OCI-LY7 (cell line): ENCODE measurements at regions of chr17 and their contacts with region 1.

Region 1: DNA sequence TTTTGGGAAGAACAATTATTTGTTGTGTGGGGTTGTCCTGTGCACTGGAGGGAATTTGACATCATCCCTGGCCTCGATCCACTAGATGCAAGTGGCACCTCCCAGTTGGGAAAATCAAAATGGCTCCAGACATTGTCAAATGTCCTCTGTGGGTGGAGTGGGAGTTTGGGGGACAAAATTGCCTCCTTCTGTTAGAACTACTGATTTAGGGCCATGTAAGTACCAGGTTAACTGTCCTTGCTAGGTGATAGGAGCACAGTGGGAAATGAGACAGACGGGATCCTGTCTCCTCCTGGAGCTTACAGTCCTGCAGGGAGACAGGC is 56.8 kb downstream of the ARHGAP23 start:
- DNase-seq: no peak
- H3K4me3 ChIP-seq: no peak overlapping the region
- H3K27ac ChIP-seq: peak overlapping the region; percentile 68
- H3K4me1 ChIP-seq: peaks cover 14% of the 10 kb centered on the region
- CTCF ChIP-seq: peak; percentile 5; the same call in 1 of the 2 replicates

Region 2: GRCh38 chr17:38351412-38352222 is 133.5 kb before region 1 on chr17 and contains the start of gene SOCS7:
- CTCF ChIA-PET with region 1: no interaction called
- POLR2A ChIA-PET with region 1: interaction called, 3 read pairs
- intact Hi-C with region 1: loop called (anchors 5 kb)
- DNase-seq: peak; percentile 93
- H3K4me3 ChIP-seq: peak within 1 kb of the TSS; percentile 89
- H3K27ac ChIP-seq: peak within 1 kb of the TSS; percentile 35
- H3K4me1 ChIP-seq: peaks cover 48% of the 10 kb centered on the region
- CTCF ChIP-seq: no peak
- total RNA-seq, gene SOCS7: 27.0 and 36.1 TPM in 2 replicates

Region 3: DNA sequence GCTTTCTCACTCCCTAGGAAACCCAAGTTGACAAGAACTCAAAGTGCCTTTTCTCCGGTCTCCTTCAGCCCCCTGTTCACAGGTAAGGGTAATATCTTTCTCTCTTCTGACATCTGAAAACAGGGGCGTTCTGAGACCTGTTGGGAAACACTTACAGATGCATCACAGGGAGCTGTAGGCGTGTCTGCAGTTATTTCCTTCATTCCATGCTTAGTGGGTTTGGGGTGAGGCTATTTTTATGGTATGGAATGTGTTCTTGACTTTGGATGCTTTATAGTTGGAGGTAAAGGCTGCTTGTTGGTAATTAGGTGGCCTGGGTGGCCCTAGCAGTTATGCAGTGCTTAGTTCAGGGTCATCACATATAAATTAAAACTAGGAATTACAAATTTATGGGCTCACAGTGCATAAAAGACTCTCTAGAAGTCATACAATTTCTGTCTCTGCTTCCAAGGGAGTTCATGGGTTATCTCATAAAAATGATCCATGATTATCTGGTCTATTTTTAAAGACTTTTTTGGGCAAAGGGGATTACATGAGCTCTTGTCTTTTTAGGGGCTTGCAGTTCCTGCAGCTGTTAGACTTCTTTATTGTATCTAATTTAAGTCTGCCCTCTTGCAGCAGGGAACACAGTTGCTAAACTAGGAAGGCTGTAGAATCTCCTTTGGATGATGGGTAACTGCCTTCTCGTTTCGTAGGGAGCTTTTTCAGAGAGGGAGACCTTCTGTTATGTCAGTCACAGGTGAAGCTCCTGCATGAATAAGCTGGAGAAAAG is 123.2 kb before region 1 on chr17:
- CTCF ChIA-PET with region 1: no interaction called
- POLR2A ChIA-PET with region 1: no interaction called
- intact Hi-C with region 1: no loop called
- DNase-seq: no peak
- H3K4me3 ChIP-seq: no peak overlapping the region
- H3K27ac ChIP-seq: no peak overlapping the region
- H3K4me1 ChIP-seq: peaks cover 7% of the 10 kb centered on the region
- CTCF ChIP-seq: no peak

Region 4: DNA sequence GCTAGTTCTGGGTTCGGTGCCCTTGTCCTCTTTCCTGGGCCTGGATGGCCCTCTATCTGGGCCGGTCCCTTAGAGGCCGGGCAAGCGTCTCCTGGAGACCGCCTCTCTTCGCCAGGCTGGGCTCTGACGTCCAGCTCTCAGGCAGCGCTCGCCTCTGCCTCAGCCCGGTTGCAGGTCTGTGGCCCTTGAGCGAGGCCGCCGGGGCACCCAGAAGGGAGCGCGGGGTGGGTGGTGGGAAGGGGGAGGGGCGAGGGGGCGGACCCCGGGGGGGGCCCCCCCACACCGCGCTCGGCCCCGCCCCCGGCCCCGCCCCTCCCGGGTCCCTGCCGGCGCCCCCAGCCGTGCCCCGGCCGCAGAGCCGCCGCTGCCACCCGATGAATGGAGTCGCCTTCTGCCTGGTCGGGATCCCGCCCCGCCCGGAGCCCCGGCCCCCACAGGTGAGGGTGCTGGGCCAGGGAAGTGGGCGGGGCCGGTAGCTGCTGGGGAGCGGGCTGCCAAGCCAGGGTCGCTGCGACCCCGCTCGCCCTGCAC is 56.9 kb before region 1 on chr17 and contains the start of gene ARHGAP23:
- CTCF ChIA-PET with region 1: no interaction called
- POLR2A ChIA-PET with region 1: interaction called, 4 read pairs
- intact Hi-C with region 1: loop called (anchors 1 kb)
- DNase-seq: peak; percentile 51
- H3K4me3 ChIP-seq: peak within 1 kb of the TSS; percentile 74
- H3K27ac ChIP-seq: peak within 1 kb of the TSS; percentile 31
- H3K4me1 ChIP-seq: peaks cover 27% of the 10 kb centered on the region
- CTCF ChIP-seq: no peak
- total RNA-seq, gene ARHGAP23: 18.6 and 25.4 TPM in 2 replicates

Region 5: GRCh38 chr17:38444151-38444550 is 41.0 kb before region 1 on chr17:
- CTCF ChIA-PET with region 1: no interaction called
- POLR2A ChIA-PET with region 1: no interaction called
- intact Hi-C with region 1: loop called (anchors 1 kb)
- DNase-seq: peak; percentile 74
- H3K4me3 ChIP-seq: no peak overlapping the region
- H3K27ac ChIP-seq: no peak overlapping the region
- H3K4me1 ChIP-seq: peaks cover 24% of the 10 kb centered on the region
- CTCF ChIP-seq: peak; percentile 85